ENCODE measurements at regions of chr1 and their contacts with region 1.

Region 1: DNA sequence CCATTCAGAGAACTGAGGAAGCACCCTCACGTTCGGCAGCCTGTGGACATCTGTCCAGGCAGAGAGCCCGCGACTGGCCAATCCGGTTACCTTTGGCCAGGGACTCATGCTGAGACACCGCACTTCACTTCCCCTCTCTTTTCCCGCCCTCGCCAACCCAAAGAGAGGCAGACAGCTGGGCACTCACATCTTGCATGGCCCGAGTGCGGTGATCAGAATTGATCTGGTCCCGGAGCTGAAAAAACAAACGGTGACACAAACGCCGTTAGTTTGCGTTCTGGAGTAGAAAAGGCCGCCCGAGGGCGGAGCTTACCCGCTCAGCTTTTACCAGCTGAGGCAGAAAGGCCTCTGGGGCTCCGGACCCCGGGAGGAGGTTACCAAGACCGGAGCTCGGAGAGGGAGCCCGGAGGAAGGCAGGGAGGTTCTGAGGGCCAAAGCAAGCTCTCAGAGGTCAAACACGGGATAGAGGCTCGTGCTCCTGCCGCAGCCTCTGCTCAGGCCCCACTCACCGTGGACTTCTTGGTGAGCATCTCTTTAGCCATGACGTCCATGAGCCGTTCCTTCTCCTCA is 376 bp downstream of the SF3A3 start:
- DNase-seq: peak; percentile 67
- H3K4me3 Mint-ChIP-seq: peak overlapping the region; percentile 99
- H3K27ac Mint-ChIP-seq: peak overlapping the region; percentile 92
- H3K4me1 Mint-ChIP-seq: peaks cover 25% of the 10 kb centered on the region
- H3K27me3 Mint-ChIP-seq: peaks cover 7% of the 10 kb centered on the region

Region 2: GRCh38 chr1:37999430-38000232 is 10.2 kb after region 1 on chr1:
- CTCF ChIA-PET with region 1: interaction called, 15 read pairs
- DNase-seq: no peak
- H3K4me3 Mint-ChIP-seq: no peak overlapping the region
- H3K27ac Mint-ChIP-seq: peak overlapping the region; percentile 80
- H3K4me1 Mint-ChIP-seq: peaks cover 50% of the 10 kb centered on the region
- H3K27me3 Mint-ChIP-seq: peaks cover 16% of the 10 kb centered on the region

Region 3: DNA sequence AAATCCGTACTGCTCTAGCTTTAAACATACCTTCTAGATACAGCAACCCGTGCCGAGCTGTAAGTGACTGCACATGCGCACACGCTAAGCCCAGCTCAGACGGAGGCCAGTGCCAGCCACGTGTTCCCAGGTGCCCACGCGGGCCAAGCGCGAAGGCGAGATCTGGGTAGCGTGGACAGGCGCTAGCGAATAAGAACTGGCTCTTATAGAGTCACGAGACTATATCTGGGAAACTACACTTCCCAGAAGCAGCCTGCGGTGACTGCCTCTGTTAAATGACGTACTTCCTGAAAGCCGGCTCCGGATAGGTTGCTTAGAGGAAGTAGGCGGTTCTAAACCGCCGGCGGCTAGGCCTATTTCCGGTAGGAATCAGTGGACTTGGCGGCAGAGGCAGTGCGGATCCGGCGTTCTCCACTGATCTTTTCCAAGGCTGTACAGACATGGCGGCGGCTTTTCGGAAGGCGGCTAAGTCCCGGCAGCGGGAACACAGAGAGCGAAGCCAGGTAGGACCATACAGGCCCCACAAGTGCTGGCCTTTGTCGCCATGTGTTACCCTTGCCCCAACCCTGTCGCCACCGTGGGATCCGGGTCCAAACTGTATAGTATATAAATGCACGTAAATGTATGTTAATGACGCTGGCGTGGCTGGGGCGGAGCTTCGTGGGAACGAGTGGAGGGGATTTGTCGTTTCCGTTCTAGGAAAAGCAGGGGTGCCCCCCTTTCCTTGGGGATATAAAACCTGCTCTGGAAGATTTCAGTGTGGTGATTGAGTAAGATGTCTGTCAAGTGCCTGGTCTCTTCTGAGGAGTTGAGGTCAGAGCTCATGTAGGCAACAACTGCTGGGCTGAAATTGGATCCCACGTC is 23.1 kb after region 1 on chr1 and contains the start of gene UTP11:
- CTCF ChIA-PET with region 1: interaction called, 37 read pairs
- DNase-seq: peak; percentile 95
- H3K4me3 Mint-ChIP-seq: peak within 1 kb of the TSS; percentile 97
- H3K27ac Mint-ChIP-seq: peak within 1 kb of the TSS; percentile 94
- H3K4me1 Mint-ChIP-seq: peaks cover 63% of the 10 kb centered on the region
- H3K27me3 Mint-ChIP-seq: no peaks in the 10 kb centered on the region

Region 4: DNA sequence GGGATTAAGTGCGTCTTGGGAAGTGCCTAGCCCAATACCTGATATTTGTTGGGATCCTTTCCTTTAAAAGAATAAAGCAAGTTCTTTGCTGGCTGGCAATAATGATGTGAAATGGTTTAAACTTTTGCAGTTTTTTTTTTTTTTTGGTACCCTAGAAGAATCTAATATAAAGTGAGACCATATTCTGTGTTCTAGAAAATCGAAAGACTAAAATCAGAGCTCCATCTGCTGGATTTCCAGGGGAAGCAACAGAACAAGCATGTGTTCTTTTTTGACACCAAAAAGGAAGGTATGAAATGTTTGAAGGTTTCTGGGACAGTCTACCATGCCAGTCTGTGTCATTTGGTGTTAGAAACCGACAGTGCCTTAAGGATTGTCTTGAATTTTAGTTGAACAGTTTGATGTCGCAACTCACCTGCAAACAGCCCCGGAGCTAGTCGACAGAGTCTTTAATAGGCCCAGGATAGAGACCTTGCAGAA is 29.5 kb after region 1 on chr1:
- CTCF ChIA-PET with region 1: interaction called, 15 read pairs
- DNase-seq: no peak
- H3K4me3 Mint-ChIP-seq: no peak overlapping the region
- H3K27ac Mint-ChIP-seq: no peak overlapping the region
- H3K4me1 Mint-ChIP-seq: peaks cover 16% of the 10 kb centered on the region
- H3K27me3 Mint-ChIP-seq: no peaks in the 10 kb centered on the region